ENCODE measurements at regions of chr1 and their contacts with region 1.

Region 1: GRCh38 chr1:87325982-87326738 is 2.5 kb upstream of the LMO4 start:
- DNase-seq: peak; percentile 41
- H3K27ac ChIP-seq: no peak overlapping the region
- CTCF ChIP-seq: peak; percentile 80

Region 2: DNA sequence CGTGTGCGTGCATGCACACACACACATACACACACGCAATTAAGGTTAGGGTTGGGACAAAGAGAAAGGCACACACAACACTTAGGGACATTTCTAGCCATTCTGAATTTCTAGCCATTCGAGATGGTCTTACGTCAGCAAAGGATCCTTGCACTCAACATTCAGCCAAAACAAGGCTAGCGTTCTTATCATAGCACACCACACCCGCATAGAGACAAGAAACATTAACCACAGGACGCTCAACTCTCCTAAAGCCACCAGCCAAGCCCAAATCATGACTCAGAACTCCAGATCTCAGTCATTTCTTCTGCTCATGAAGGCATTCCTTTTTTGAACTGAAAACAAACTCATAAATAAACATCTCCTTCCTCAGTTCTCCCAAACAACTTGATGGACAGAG is 109.3 kb after region 1 on chr1:
- CTCF ChIA-PET with region 1: no interaction called
- POLR2A ChIA-PET with region 1: no interaction called
- DNase-seq: no peak
- H3K27ac ChIP-seq: no peak overlapping the region
- CTCF ChIP-seq: no peak

Region 3: DNA sequence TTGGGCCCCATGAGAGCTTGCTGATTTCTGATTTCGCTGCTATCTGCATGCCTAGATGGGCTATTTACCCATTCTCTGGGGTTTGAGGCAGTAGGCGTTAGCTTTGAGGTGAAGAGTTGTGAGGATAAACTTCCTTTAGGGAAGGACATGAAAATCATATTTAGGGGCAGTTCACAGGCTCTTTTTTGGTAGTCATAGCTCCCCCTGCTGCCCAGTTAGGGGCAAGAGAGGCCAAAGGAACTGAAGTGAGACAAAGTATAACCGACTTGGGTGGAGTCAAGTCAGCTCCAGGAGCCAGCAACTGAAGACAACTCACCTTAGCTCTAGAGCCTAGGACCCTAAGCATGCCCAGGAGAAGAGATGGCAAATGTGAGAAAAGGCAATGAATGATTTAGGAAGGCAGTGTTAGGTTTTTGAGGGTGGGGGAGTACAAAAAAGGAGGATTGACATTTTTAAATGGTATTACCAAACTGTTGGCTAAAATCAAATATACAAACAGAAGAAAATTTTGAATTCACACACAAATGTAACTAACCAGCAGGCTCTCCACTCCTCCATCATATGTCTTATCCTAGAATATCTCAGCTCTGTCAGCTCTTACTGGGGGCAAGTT is 627.7 kb after region 1 on chr1:
- CTCF ChIA-PET with region 1: interaction called, 10 read pairs
- POLR2A ChIA-PET with region 1: no interaction called
- DNase-seq: peak; percentile 26
- H3K27ac ChIP-seq: no peak overlapping the region
- CTCF ChIP-seq: peak; percentile 28; the same call in 1 of the 2 replicates

Measured in RWPE1 (cell line).